Activated CD4-positive, alpha-beta T cell treated with anti-CD3 and anti-CD28 coated beads for 36 hours (primary cell): ENCODE measurements at regions of chr1 and their contacts with region 1.

Region 1: GRCh38 chr1:153946622-153947241 is at the start of gene DENND4B:
- DNase-seq: peak; percentile 87
- ATAC-seq: peak; percentile 74
- H3K4me3 Mint-ChIP-seq: peak within 1 kb of the TSS; percentile 88
- H3K27ac Mint-ChIP-seq: peak within 1 kb of the TSS; percentile 96
- H3K4me1 Mint-ChIP-seq: peaks cover 24% of the 10 kb centered on the region
- H3K27me3 Mint-ChIP-seq: no peaks in the 10 kb centered on the region
- total RNA-seq, gene DENND4B: 100 to 110 TPM

Region 2: GRCh38 chr1:153510984-153511410 is 435.7 kb before region 1 on chr1:
- CTCF ChIA-PET with region 1: no interaction called
- POLR2A ChIA-PET with region 1: no interaction called
- intact Hi-C with region 1: loop called in 1 of 2 experiments (anchors 1 kb)
- DNase-seq: peak; percentile 90
- ATAC-seq: peak; percentile 95
- H3K4me3 Mint-ChIP-seq: no peak overlapping the region
- H3K27ac Mint-ChIP-seq: peak overlapping the region; percentile 74
- H3K4me1 Mint-ChIP-seq: peaks cover 10% of the 10 kb centered on the region
- H3K27me3 Mint-ChIP-seq: no peaks in the 10 kb centered on the region

Region 3: DNA sequence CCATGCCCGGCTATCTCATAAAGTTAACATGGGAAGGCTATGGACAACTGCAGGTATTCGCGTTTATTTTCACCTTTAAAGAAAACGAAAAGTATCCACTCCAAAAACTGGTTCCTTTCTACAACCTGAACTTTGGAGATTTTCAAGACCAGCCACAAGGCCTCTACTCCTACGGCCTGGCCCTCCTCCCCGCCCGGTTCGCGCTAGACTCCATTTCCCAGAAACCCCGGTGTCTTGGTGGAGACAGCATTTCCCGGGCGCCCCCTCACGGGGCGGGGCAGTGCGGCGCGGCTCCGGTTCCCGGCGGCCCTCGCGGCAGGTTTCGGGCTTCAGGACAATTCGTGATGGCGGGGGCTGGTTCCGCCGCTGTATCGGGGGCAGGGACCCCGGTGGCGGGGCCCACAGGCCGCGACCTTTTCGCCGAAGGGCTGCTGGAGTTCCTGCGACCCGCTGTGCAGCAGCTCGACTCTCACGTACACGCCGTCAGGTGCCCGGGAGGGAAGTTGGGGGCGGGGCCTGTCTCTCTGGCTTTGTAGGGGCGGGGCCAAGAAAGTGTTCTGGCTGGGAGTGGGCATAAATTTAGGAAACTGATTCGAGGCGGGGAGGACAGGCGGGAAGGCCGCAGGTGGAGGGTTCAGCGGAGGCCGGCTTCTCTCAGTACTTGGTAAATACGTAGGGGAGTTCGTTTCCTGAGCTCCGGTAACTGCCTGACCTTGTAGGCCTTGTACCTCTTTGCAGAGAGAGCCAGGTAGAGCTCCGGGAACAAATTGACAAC is 288.1 kb before region 1 on chr1 and contains the start of gene SNAPIN:
- CTCF ChIA-PET with region 1: no interaction called
- POLR2A ChIA-PET with region 1: no interaction called
- intact Hi-C with region 1: no loop called
- DNase-seq: peak; percentile 96
- ATAC-seq: peak; percentile 96
- H3K4me3 Mint-ChIP-seq: peak within 1 kb of the TSS; percentile 95
- H3K27ac Mint-ChIP-seq: peak within 1 kb of the TSS; percentile 90
- H3K4me1 Mint-ChIP-seq: peaks cover 13% of the 10 kb centered on the region
- H3K27me3 Mint-ChIP-seq: no peaks in the 10 kb centered on the region
- total RNA-seq, gene SNAPIN: 34.2 to 38.4 TPM

Region 4: GRCh38 chr1:153805042-153805745 is 141.5 kb before region 1 on chr1:
- CTCF ChIA-PET with region 1: interaction called, 3 read pairs
- POLR2A ChIA-PET with region 1: no interaction called
- intact Hi-C with region 1: loop called in 1 of 2 experiments (anchors 1 kb)
- DNase-seq: peak; percentile 87
- ATAC-seq: peak; percentile 98
- H3K4me3 Mint-ChIP-seq: peak overlapping the region; percentile 28
- H3K27ac Mint-ChIP-seq: peak overlapping the region; percentile 85
- H3K4me1 Mint-ChIP-seq: peaks cover 30% of the 10 kb centered on the region
- H3K27me3 Mint-ChIP-seq: no peaks in the 10 kb centered on the region

Region 5: DNA sequence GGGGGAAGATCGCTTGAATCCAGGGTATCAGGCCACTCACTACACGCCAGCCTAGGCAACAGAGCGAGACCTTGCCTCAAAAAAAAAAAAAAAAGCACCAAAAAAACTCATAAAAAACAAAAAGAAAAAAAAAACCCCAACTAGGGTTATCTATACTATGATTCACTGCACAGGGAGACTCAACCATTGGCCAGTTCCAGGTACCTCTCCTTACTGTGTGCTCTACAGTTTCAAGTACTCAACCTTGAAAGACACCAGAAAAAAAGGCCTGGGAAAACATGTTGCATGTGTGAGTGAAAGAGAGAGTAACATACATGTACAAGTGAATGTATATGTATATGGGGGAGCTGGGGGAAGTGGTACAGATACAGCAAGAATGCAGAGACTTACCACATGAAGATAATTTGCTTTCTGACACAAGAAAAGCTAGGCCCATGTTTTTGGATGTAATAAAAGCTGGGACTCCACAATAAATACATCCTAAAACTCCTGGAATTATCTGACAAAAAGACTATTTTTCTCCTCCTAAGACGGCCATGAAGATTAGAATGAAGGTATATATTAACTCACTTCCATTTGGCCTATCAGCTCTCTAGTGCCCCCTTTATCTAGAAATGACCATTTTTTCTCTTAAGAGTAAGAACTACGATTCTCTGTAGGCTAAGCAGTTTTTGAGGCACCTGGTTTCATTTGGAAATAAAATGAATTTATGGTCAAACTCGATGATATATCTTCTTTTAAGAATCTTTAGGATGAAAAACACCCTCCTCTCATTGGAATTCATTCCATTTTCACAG is 119.4 kb before region 1 on chr1:
- CTCF ChIA-PET with region 1: interaction called, 13 read pairs
- POLR2A ChIA-PET with region 1: no interaction called
- intact Hi-C with region 1: no loop called
- DNase-seq: no peak
- ATAC-seq: peak; percentile 80
- H3K4me3 Mint-ChIP-seq: no peak overlapping the region
- H3K27ac Mint-ChIP-seq: peak overlapping the region; percentile 47
- H3K4me1 Mint-ChIP-seq: peaks cover 7% of the 10 kb centered on the region
- H3K27me3 Mint-ChIP-seq: no peaks in the 10 kb centered on the region

Region 6: DNA sequence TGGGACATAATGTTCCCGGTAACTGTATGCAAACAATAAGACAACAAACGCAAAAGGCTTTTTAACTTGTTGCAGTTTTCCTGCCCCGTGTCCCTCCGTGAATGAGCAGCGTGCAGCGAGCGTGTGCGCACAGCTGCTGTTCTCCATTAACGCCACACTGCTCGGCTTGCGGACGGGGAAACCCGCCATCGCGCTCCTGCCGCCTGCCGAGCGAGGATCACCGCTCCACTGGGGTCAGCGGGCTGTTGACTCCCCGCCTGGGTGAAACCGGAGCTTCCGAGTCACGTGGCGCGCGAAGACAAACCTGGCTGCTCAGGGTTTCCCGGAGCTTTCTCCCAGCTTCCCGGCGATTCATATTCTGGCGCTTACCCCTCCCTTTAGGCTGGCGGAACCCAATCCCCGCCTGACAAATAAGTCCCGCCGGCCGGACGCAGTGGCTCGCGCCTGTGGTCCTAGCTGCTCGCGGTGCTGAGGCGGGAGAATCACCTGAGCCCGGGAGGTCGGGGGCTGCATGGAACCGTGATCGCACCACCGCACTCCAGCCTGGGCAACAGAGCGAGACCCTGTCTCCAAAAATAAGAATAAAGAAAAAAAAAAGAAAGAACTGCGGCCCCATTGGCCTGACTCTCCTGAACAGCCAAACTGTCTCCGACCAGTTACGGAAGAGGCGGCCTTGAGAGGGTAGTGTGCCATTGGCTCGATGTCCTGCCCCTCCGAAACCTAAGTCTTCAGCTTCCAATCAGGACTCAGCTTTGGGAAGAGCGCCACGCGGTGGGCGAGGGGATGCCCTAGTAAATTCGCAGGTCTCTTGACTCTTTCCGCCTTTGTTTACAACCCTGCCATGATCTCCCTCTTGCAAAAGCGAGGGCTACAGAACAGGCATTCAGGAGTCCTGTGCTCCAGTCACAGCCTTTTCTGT is 20.6 kb after region 1 on chr1 and contains the start of gene CREB3L4:
- CTCF ChIA-PET with region 1: interaction called, 28 read pairs
- POLR2A ChIA-PET with region 1: interaction called, 10 read pairs
- intact Hi-C with region 1: loop called in 1 of 2 experiments (anchors 2 kb)
- DNase-seq: peak; percentile 91
- ATAC-seq: peak; percentile 87
- H3K4me3 Mint-ChIP-seq: peak within 1 kb of the TSS; percentile 96
- H3K27ac Mint-ChIP-seq: peak within 1 kb of the TSS; percentile 96
- H3K4me1 Mint-ChIP-seq: peaks cover 38% of the 10 kb centered on the region
- H3K27me3 Mint-ChIP-seq: no peaks in the 10 kb centered on the region
- total RNA-seq, gene CREB3L4: 8.5 to 9.1 TPM